Right ventricle myocardium inferior (tissue), 1 donor: ENCODE measurements at regions of chr19 and their contacts with region 1.

Region 1: DNA sequence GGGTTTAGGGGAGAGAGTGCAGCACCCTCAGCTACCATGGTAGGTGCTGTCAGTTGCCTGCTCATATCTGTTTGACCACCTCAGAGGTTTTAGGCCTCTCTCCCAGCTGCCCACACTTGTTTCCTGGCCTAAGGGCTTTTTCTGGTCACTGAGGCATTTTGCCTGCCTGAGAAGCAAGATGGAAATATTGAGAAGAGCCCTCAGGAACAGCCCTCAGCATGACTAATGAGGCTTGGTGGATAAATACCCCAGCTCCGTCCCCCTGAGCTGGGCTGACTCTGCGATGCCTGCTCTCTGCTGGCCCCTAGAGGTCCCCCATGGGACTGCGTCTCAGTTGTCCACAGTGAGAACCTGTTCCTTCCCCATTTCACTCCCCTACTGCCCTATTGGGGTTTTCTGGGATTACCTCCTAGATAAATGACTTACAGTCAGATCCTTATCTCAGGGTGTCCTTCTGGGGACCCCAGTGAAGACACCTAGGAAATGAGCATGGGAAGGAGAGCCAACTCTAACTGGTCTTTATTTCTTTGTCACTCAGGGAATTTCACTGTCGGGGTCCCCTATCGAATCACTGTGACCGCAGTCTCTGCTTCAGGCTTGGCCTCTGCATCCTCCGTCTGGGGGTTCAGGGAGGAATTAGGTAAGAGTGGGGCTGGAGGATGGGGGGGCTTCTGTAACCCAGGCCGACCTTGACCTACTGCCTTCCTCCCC is 13.3 kb downstream of the PALM3 start:
- DNase-seq: peak; percentile 80
- ATAC-seq: peak; percentile 50

Region 2: GRCh38 chr19:13880059-13881043 is 168.2 kb before region 1 on chr19:
- intact Hi-C with region 1: loop called (anchors 2 kb)
- DNase-seq: peak; percentile 99
- ATAC-seq: peak; percentile 97

Region 3: GRCh38 chr19:14081325-14082093 is 32.9 kb after region 1 on chr19:
- intact Hi-C with region 1: no loop called
- DNase-seq: peak; percentile 98
- ATAC-seq: peak; percentile 96